GM13976 (cell line): ENCODE measurements at regions of chr16 and their contacts with region 1.

Region 1: DNA sequence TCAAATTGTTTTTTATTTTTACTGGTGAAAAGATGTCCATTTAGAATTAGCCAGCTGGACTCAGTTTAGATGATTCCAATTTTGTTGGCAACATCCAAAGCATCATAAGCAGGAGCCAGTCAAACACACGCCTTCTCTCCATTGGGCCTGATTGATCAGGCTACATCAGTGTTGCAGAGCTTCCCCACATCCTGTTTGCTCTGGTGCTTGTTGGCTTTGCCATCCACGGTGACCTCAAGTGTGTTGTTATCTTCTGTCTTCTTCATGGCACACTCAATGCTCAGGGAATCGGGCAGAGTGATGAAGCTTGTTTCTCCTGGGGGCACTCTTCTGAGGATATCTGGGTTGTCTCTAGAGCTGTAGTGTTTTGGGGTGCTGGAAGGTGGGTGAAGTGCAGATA is 6.3 kb upstream of the NETO2 start:
- DNase-seq: no peak
- CTCF ChIP-seq: no peak

Region 2: DNA sequence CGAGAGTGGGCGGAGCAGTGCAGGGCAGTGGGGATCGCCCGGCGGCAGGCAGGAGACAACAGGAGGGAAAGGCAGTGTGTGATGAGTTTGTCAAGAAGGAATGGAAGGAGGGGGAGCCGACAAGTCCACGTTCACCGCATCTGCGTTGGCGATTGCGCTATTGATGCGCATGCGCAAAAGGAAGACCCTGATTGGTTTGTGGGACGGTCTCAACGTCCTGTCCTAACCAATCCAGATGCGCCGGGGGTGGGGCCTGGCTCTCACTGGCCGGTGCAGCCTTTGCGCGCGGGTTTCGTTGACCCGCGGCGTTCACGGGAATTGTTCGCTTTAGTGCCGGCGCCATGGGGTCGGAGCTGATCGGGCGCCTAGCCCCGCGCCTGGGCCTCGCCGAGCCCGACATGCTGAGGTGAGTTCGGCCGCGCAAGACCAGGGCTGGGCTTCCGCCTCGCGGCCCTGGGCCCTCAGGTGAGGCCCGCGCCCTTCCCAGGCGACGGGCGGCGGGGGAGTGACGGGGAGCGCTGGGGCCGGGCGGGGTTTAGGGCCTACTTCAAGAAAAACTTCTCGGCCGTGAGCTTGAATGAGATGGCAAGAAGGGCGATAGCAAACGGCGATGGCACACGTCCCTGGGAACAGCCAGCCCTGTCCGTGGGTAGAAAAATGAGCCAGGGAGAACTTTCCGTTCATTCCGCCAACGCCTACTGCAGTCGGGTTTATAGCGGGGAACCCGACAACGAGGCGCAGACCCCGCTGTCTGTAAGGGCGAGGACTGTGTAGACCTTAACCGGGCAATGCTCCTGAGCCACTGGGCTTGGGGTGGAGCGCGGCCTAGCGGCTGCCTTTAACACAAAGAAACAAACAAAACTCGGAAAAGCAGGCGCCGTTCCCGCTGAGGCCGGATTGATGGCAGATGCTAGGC is 460.4 kb before region 1 on chr16 and contains the start of gene ORC6:
- in situ Hi-C with region 1: no loop called
- DNase-seq: peak; percentile 96
- CTCF ChIP-seq: peak; percentile 62

Region 3: GRCh38 chr16:47565454-47565853 is 415.4 kb after region 1 on chr16:
- in situ Hi-C with region 1: no loop called
- DNase-seq: no peak
- CTCF ChIP-seq: no peak

Region 4: GRCh38 chr16:48054881-48055601 is 905.0 kb after region 1 on chr16:
- in situ Hi-C with region 1: loop called (anchors 10 kb)
- DNase-seq: peak; percentile 70
- CTCF ChIP-seq: peak; percentile 93

Region 5: GRCh38 chr16:48143812-48144368 is 993.8 kb after region 1 on chr16:
- in situ Hi-C with region 1: loop called (anchors 10 kb)
- DNase-seq: no peak
- CTCF ChIP-seq: no peak